ENCODE measurements at regions of chr5 and their contacts with region 1.

Region 1: GRCh38 chr5:112146323-112147226 is 272.5 kb downstream of the EPB41L4A start:
- DNase-seq: peak; percentile 73
- ATAC-seq: peak; percentile 96
- H3K4me3 Mint-ChIP-seq: no peak overlapping the region
- H3K27ac Mint-ChIP-seq: no peak overlapping the region
- H3K4me1 Mint-ChIP-seq: no peaks in the 10 kb centered on the region
- H3K27me3 Mint-ChIP-seq: peaks cover 4% of the 10 kb centered on the region

Region 2: DNA sequence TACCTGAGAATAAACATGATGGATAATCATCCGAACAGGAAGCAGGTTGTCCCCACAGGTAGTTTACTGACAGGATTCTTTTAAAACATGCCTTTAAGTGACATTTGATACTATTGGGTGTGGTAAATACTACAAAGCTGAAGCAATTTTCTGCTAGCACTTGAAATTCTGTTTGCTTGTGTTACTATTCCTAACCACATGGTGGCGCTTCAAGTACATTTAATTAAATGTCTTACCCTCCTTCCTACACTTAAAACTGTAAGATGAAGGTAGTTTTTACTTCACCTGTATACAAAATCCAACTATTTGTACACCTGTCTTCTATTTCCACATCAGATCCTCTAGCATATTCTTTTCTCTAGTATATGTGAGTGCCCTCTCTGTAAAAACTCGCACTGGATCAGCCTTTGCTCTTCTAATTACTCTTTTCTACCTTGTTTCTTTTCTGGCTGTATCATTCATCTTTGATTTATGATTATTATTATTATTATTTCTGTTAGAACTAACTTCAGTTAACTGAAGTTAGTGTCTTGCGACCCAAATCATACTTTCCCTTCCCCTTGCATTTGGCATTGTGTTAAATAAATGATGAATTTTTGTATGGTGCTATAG is 1389.4 kb before region 1 on chr5:
- CTCF ChIA-PET with region 1: no interaction called
- POLR2A ChIA-PET with region 1: no interaction called
- intact Hi-C with region 1: loop called (anchors 1 to 10 kb)
- DNase-seq: peak; percentile 17
- ATAC-seq: no peak
- H3K4me3 Mint-ChIP-seq: no peak overlapping the region
- H3K27ac Mint-ChIP-seq: no peak overlapping the region
- H3K4me1 Mint-ChIP-seq: peaks cover 27% of the 10 kb centered on the region
- H3K27me3 Mint-ChIP-seq: no peaks in the 10 kb centered on the region

Region 3: GRCh38 chr5:111278845-111279504 is 867.6 kb before region 1 on chr5:
- CTCF ChIA-PET with region 1: no interaction called
- POLR2A ChIA-PET with region 1: no interaction called
- intact Hi-C with region 1: loop called in 1 of 2 experiments (anchors 2 kb)
- DNase-seq: peak; percentile 93
- ATAC-seq: peak; percentile 97
- H3K4me3 Mint-ChIP-seq: no peak overlapping the region
- H3K27ac Mint-ChIP-seq: peak overlapping the region; percentile 79
- H3K4me1 Mint-ChIP-seq: peaks cover 69% of the 10 kb centered on the region
- H3K27me3 Mint-ChIP-seq: no peaks in the 10 kb centered on the region

Region 4: DNA sequence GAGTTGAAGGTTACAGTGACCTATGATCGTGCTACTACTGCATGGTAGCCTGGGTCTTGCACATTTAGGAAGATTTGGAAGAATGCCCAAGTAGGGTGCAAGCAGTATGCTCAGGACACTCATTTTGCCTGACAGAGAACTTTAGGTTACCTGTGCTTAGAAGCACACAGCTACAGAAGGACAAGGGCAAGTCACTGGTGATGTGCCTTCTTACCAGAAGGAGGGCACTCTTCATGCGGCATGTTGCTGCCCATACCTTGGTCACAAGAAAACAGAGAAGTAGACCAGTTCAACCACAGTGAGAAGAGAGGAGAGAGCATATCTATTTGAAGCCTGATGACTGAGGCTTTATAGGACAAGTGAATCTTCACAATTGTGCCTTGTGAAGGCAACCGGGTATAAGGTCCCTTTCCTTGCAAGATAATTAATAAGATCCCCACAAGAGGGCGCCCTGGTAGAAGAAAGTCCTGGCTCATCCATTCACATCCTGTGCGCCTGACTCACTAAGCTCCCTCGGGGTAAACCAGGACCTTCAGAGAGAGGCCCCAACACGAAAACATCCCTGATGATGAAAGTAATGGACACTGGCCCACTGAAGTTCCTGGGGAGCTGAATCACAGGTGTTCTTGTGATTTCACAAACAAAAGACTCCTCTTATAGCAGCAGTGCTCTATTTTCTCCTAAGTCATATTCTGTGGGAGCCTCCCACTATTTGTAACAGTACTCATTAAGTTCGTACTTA is 596.1 kb before region 1 on chr5:
- CTCF ChIA-PET with region 1: interaction called, 12 read pairs
- POLR2A ChIA-PET with region 1: no interaction called
- intact Hi-C with region 1: loop called (anchors 1 kb)
- DNase-seq: peak; percentile 86
- ATAC-seq: peak; percentile 90
- H3K4me3 Mint-ChIP-seq: no peak overlapping the region
- H3K27ac Mint-ChIP-seq: peak overlapping the region; percentile 67
- H3K4me1 Mint-ChIP-seq: peaks cover 36% of the 10 kb centered on the region
- H3K27me3 Mint-ChIP-seq: no peaks in the 10 kb centered on the region

Region 5: DNA sequence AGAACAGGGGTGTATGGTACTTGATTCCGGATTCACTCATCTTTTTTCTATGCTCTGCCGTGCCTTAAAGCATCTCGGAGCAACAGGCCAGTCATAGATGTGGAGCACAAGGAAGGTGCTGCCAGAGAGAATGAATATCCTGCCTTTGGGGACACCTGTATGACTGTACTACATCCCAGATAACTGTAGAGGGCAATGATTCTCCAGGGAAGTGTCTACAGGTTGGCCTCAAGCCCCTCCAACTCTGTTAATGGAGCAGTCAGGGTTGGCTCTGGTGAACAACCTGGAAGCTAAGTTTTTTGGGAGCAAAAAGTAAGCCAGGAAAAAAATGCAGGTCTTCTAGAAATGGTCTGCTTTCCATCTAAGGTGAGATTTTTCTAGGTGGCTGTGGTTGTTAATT is 460.6 kb before region 1 on chr5:
- CTCF ChIA-PET with region 1: interaction called, 5 read pairs
- POLR2A ChIA-PET with region 1: no interaction called
- intact Hi-C with region 1: loop called (anchors 1 kb)
- DNase-seq: no peak
- ATAC-seq: no peak
- H3K4me3 Mint-ChIP-seq: no peak overlapping the region
- H3K27ac Mint-ChIP-seq: no peak overlapping the region
- H3K4me1 Mint-ChIP-seq: no peaks in the 10 kb centered on the region
- H3K27me3 Mint-ChIP-seq: no peaks in the 10 kb centered on the region

Region 6: GRCh38 chr5:111853748-111854147 is 292.8 kb before region 1 on chr5:
- CTCF ChIA-PET with region 1: no interaction called
- POLR2A ChIA-PET with region 1: no interaction called
- intact Hi-C with region 1: loop called in 1 of 2 experiments (anchors 10 kb)
- DNase-seq: peak; percentile 9
- ATAC-seq: peak; percentile 51
- H3K4me3 Mint-ChIP-seq: no peak overlapping the region
- H3K27ac Mint-ChIP-seq: no peak overlapping the region
- H3K4me1 Mint-ChIP-seq: no peaks in the 10 kb centered on the region
- H3K27me3 Mint-ChIP-seq: no peaks in the 10 kb centered on the region